ENCODE measurements at regions of chr6 and their contacts with region 1.

Region 1: GRCh38 chr6:27126815-27127537 is 120.5 kb upstream of the PRSS16 start:
- DNase-seq: peak; percentile 84 to 94
- ATAC-seq: peak; percentile 88 to 95 (median 91)
- H3K4me3 ChIP-seq: peak overlapping the region in 9 of 10 donors; percentile 2 to 53 (median 46)
- H3K27ac ChIP-seq: peak overlapping the region in 9 of 10 donors; percentile 12 to 83 (median 66)
- H3K4me1 ChIP-seq: peaks cover 0 to 25% (median 6%) of the 10 kb centered on the region in 9 donors
- H3K27me3 ChIP-seq: no peaks in the 10 kb centered on the region
- CTCF ChIP-seq: peak; percentile 68 to 96 (median 87)

Region 2: GRCh38 chr6:27111743-27112142 is 15.2 kb before region 1 on chr6:
- intact Hi-C with region 1: no loop called
- DNase-seq: no peak
- ATAC-seq: no peak
- H3K4me3 ChIP-seq: no peak overlapping the region
- H3K27ac ChIP-seq: no peak overlapping the region
- H3K4me1 ChIP-seq: no peaks in the 10 kb centered on the region
- H3K27me3 ChIP-seq: peaks cover 0 to 6% (median 0%) of the 10 kb centered on the region in 7 donors
- CTCF ChIP-seq: no peak

Region 3: GRCh38 chr6:27157459-27158315 is 30.7 kb after region 1 on chr6:
- intact Hi-C with region 1: loop called in 3 of 10 experiments (anchors 1 to 5 kb)
- DNase-seq: peak; percentile 62 to 65
- ATAC-seq: peak in 7 of 8 donors; percentile 64 to 92 (median 80)
- H3K4me3 ChIP-seq: peak overlapping the region; percentile 5 to 54 (median 44)
- H3K27ac ChIP-seq: peak overlapping the region in 1 of 10 donors; percentile 11
- H3K4me1 ChIP-seq: peaks cover 0 to 17% (median 9%) of the 10 kb centered on the region in 9 donors
- H3K27me3 ChIP-seq: peaks cover 0 to 18% (median 0%) of the 10 kb centered on the region in 7 donors
- CTCF ChIP-seq: peak in 8 of 9 donors; percentile 7 to 75 (median 60)

Region 4: DNA sequence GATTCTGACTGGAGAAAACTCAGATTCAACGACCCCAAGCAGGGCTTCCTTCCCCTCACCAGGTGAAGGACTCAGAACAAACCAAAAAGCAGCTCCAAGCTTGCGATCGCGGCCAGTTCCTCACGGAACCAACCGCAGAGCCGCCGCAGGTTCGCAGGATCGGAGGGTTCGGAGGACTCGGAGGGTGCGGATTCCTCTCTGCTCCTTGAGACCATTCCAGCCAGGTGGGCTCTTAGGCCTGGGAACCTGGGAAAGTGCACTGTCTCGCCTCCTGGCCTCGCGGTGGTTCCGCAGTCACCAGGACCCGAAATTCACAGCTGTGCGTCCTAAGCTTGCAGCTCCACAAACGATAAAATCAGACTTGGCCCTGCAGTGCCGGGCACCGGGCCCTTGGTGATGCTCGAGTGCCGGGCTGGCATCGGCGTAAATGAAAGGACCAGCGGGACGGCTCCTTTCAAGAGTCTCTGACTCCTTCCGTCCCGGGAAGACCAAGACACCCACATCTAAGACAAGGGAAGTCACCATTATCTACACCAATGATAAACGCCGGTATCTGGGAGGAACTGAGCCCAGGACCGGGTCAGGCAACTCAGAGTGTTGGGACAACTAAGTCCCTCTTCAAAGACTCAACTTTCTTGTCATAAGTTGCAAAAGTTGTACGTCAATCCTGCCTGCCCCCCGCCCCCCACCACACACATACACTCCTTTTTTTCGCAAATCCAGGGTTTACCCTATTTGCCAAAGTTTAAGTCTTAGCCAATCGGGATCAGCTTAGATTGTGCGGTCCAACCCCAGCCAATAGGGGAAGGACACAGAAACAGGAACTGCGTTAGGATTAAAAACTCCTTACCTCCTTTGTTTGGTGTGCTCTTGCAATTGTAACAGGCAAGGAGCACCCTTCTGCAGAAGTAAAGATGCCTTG is 50.8 kb after region 1 on chr6:
- intact Hi-C with region 1: no loop called
- DNase-seq: peak; percentile 62 to 65
- ATAC-seq: peak; percentile 73 to 94 (median 86)
- H3K4me3 ChIP-seq: peak overlapping the region; percentile 73 to 100 (median 87)
- H3K27ac ChIP-seq: peak overlapping the region in 9 of 10 donors; percentile 23 to 84 (median 61)
- H3K4me1 ChIP-seq: peaks cover 0 to 20% (median 7%) of the 10 kb centered on the region in 9 donors
- H3K27me3 ChIP-seq: peaks cover 0 to 16% (median 8%) of the 10 kb centered on the region in 7 donors
- CTCF ChIP-seq: peak in 7 of 9 donors; percentile 19 to 62 (median 48)

Region 5: DNA sequence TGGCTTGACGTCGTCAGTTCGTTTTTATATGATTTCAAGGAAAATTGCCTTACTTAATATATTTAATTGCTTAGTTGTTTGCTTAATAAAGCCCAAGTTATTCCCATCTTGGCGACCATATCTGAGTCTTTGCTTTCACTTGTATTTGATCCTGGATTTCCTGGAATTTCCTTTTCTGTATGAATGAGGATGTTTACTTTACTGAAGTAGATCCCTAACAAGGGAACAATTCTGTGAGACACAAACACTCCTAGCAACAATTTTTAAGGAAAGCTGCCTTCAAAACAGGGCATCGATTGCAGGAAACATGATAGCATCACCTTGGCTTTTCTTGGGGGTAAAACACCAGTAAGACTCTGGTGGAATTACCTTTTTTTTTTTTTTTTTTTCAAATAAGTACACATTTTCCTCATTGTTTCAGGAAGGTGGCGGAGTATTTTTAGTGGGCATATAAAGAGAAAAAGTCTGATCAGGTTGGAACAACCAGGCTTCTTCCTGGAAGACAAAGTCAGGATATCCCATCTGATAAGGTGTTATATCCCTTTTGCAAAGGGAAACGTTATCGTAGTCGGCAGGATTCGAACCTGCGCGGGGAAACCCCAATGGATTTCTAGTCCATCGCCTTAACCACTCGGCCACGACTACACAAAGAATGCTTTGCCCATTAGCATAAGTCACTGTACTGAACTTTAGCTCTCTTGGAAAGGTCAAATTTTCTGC is 414.4 kb after region 1 on chr6:
- intact Hi-C with region 1: no loop called
- DNase-seq: no peak
- ATAC-seq: no peak
- H3K4me3 ChIP-seq: no peak overlapping the region
- H3K27ac ChIP-seq: no peak overlapping the region
- H3K4me1 ChIP-seq: peaks cover 0 to 9% (median 5%) of the 10 kb centered on the region in 9 donors
- H3K27me3 ChIP-seq: peaks cover 10 to 99% (median 92%) of the 10 kb centered on the region in 7 donors
- CTCF ChIP-seq: no peak